ENCODE measurements at regions of chr1 and their contacts with region 1.

Region 1: DNA sequence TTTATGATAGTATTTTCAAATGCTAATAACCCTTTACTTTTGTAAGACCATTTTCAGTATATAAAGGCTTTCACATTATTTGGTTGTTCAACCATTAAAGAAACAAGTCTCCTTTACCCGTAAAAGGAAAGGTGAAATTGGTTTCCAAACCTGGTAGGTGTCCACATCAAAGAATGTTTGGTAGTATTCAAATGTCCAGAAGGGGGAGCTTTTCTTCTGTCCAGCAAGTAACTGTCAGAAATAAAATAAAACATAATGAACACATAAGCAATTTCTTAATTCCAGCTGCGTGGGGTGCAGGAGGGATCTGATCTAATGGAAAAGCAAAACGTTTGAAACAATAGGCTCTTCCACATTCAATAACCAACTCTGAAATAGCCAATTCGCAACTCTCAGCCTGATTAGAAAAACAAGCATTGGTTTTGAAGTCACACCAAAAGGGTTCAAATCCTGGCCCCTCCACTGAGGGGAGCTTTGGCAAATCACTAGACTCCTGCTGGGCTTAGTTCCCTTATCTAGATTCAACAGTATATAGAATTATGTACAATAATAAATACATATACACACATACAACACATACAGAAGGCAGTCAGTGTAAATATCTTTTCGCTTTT is 11.0 kb downstream of the YIPF1 start:
- DNase-seq: no peak
- ATAC-seq: no peak
- H3K4me3 ChIP-seq: no peak overlapping the region
- H3K27ac ChIP-seq: no peak overlapping the region
- H3K4me1 ChIP-seq: no peaks in the 10 kb centered on the region
- H3K27me3 ChIP-seq: no peaks in the 10 kb centered on the region
- CTCF ChIP-seq: peak; percentile 55

Region 2: DNA sequence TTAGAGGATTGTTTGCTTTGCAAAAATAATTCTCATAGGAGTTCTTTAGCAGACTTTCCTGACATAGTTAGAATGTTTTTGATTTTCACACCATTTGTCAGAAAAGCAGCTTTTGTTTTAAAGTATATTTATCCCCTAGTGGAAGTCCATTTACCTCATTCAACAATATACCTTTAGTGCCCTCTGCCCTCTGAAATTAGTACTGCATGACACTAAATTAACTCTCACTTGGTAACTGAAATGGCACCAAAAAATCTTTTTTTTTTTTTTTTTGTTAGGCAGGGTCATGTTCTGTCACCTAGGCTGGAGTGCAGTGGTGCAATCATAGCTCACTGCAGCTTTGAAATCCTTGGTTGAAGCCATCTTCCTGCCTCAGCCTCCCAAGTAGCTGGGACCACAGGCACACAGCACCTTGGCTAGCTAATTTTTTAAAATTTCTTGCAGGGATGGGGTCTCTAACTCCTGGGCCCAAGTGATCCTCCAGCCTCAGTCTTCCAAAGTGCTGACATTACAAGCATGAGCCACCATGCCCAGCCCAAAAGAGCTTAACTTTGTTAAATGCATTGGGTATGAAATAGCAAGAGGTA is 81.2 kb after region 1 on chr1:
- intact Hi-C with region 1: loop called (anchors 10 kb)
- DNase-seq: no peak
- ATAC-seq: peak in 1 of 2 donors; percentile 50
- H3K4me3 ChIP-seq: no peak overlapping the region
- H3K27ac ChIP-seq: no peak overlapping the region
- H3K4me1 ChIP-seq: peaks cover 18% of the 10 kb centered on the region
- H3K27me3 ChIP-seq: no peaks in the 10 kb centered on the region
- CTCF ChIP-seq: peak; percentile 50

Region 3: GRCh38 chr1:54377040-54377691 is 498.6 kb after region 1 on chr1:
- intact Hi-C with region 1: no loop called
- DNase-seq: no peak
- ATAC-seq: peak; percentile 37 to 58
- H3K4me3 ChIP-seq: no peak overlapping the region
- H3K27ac ChIP-seq: peak overlapping the region; percentile 49
- H3K4me1 ChIP-seq: peaks cover 50% of the 10 kb centered on the region
- H3K27me3 ChIP-seq: no peaks in the 10 kb centered on the region
- CTCF ChIP-seq: no peak